Activated T-helper 1 cell treated with anti-CD3 and anti-CD28 coated beads, Interleukin-12 subunit alpha, Interleukin-12 subunit beta, Interleukin-2, Interleukin-4 antibody, amounts not matched to agents 30 ng/mL and 10 ng/mL and 1 ng/mL, durations not matched to agents 14 hours and 24 hours and 36 hours (primary cell): ENCODE measurements at regions of chr17 and their contacts with region 1.

Region 1: DNA sequence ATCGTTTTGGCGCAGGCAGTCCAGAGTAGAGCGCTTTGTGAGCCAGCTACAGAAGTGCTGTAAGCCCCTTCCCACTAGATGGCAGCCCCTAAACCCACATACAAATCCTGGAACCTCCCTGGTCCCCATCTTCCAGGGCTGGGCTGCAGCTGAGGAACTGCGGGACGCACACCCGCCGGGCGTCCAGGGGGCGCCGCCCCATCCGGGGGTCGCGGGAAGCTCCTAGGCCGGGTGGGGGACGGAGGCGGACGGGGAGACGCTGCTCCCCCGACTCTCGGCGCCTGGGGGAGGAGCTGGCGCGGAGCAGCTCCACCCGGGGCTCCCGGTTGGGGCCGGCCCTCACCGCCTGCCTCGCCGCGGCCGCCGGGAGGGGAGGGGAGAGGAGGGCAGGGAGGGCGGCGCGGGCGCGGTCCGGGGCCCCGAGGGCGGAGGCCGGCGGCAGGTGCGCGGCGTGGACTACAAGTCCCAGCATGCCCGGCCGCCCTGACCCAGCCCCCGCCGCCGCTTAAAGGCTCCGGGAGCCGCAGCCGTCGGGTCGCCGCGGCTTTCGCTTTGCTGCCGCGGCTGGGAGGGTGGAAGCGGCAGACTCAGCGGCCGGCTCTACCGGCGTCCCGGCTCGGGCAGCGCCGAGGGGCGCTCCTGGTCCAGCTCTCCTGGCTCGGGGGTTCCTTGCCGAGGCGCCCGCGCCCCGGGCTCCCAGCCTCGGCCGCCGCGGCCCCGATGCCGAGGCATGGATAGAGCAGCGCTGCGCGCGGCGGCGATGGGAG is at the start of gene KSR1:
- DNase-seq: peak; percentile 81
- H3K4me3 Mint-ChIP-seq: peak within 1 kb of the TSS; percentile 99
- H3K27ac Mint-ChIP-seq: peak within 1 kb of the TSS; percentile 94
- H3K4me1 Mint-ChIP-seq: peaks cover 52% of the 10 kb centered on the region
- H3K27me3 Mint-ChIP-seq: peaks cover 3% of the 10 kb centered on the region
- total RNA-seq, gene KSR1: 119 and 122 TPM in 2 replicates

Region 2: GRCh38 chr17:27381007-27381501 is 75.0 kb before region 1 on chr17:
- intact Hi-C with region 1: loop called (anchors 2 kb)
- DNase-seq: peak; percentile 72
- H3K4me3 Mint-ChIP-seq: no peak overlapping the region
- H3K27ac Mint-ChIP-seq: no peak overlapping the region
- H3K4me1 Mint-ChIP-seq: peaks cover 7% of the 10 kb centered on the region
- H3K27me3 Mint-ChIP-seq: peaks cover 29% of the 10 kb centered on the region

Region 3: GRCh38 chr17:27466743-27467375 is 10.8 kb after region 1 on chr17:
- intact Hi-C with region 1: loop called (anchors 1 kb)
- DNase-seq: peak; percentile 74
- H3K4me3 Mint-ChIP-seq: peak overlapping the region; percentile 79
- H3K27ac Mint-ChIP-seq: peak overlapping the region; percentile 97
- H3K4me1 Mint-ChIP-seq: peaks cover 88% of the 10 kb centered on the region
- H3K27me3 Mint-ChIP-seq: no peaks in the 10 kb centered on the region

Region 4: DNA sequence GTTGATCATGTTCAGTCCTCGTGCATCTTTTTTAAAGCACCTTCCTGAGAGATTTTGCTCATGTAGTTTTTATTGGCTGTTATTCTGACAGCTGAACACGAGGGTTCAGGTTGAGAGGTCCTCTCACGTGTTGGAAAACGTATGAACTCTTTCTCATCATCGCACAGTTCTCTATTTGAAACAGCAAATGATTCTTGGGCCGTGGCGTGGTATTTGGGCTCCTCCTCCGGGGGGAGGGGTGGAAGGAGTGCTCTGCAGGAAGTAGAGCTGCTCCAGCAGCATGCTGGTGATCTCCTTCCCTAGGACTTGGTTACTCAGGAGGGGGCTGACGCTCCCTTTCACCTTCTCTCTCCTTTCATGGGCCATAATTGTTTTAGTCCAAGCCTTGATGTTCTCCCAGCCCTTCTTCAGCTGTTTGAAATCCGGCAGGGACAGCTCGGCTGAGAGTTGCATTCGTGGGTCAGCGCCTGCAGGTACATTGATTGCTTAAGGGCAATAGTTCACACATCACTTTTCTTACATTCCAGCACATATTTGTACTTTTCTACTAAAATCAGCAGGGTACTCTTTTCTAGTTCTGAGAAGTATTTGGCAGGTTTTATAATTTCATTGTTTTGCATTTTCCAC is 70.6 kb after region 1 on chr17:
- intact Hi-C with region 1: loop called (anchors 1 kb)
- DNase-seq: peak; percentile 54
- H3K4me3 Mint-ChIP-seq: peak overlapping the region; percentile 68
- H3K27ac Mint-ChIP-seq: peak overlapping the region; percentile 76
- H3K4me1 Mint-ChIP-seq: peaks cover 94% of the 10 kb centered on the region
- H3K27me3 Mint-ChIP-seq: no peaks in the 10 kb centered on the region

Region 5: DNA sequence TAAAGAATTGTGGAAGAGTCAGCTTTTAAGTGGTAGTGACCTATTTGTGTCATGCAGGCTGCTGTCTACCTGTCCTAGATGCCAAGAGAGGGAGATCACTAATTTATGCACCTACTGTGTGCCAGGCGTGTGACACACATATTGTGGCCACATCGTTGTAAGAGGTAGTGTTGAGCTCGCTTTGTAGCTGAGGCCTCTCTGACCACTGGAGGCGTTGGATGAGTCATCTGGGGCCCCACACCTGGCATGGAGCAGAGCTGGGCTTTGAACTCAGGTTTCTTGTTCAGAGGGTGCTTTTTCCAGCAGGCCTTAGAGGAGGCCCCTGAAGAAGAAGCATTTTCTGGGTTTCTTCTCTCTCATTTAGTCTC is 122.6 kb after region 1 on chr17:
- intact Hi-C with region 1: loop called (anchors 1 kb)
- DNase-seq: peak; percentile 62
- H3K4me3 Mint-ChIP-seq: peak overlapping the region; percentile 3
- H3K27ac Mint-ChIP-seq: peak overlapping the region; percentile 90
- H3K4me1 Mint-ChIP-seq: peaks cover 77% of the 10 kb centered on the region
- H3K27me3 Mint-ChIP-seq: no peaks in the 10 kb centered on the region